ENCODE measurements at regions of chr11 and their contacts with region 1.

Region 1: GRCh38 chr11:65083834-65084597 is at the starts of genes CDCA5 and ZFPL1:
- DNase-seq: peak; percentile 96
- H3K4me3 Mint-ChIP-seq: peak within 1 kb of the TSS; percentile 97
- H3K27ac Mint-ChIP-seq: peak within 1 kb of the TSS; percentile 97
- H3K4me1 Mint-ChIP-seq: peaks cover 32% of the 10 kb centered on the region
- H3K27me3 Mint-ChIP-seq: no peaks in the 10 kb centered on the region
- total RNA-seq, gene CDCA5: 82.0 and 86.8 TPM in 2 replicates
- total RNA-seq, gene ZFPL1: 34.9 and 37.2 TPM in 2 replicates

Region 2: DNA sequence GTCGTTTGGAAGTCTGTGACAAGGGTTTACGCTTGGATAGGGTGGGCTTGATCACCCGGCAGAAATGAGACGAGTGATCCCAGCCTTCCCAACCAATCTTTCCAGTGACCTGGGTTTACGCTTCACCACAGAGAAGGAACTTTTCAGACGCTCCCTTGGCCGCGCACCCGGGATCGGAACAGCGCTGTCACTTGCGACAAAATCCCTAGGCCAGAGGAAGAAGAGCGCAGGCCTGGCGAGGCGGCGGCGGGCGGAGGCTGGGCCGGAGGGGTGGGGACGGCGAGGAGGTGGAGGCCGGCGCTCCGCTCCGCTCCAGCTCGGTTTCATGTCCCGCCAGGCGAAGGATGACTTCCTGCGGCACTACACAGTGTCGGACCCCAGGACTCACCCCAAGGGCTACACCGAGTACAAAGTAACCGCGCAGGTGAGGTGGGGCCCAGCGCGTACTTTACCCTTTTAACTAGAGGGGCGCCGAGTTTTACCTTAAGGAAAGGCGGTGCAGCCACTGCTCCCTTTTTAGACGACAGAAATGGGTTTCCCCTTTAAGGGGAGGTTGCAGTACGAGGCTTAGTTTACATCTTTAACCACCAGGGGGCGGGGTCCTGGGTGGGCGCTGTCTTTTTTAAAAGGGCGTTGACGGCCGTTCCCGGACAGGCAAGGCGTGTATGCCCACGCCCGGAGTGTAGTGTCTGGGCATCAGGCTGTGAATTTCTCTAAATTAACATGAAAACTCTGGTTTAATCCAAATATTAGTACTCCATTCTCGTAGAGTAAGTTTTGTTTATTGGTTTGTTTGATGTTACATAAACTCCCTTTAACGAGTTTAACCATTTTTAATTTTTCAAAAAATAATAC is 56.6 kb before region 1 on chr11 and contains the start of gene SNX15:
- intact Hi-C with region 1: loop called (anchors 5 kb)
- DNase-seq: peak; percentile 88
- H3K4me3 Mint-ChIP-seq: peak within 1 kb of the TSS; percentile 76
- H3K27ac Mint-ChIP-seq: peak within 1 kb of the TSS; percentile 87
- H3K4me1 Mint-ChIP-seq: peaks cover 15% of the 10 kb centered on the region
- H3K27me3 Mint-ChIP-seq: peaks cover 2% of the 10 kb centered on the region
- total RNA-seq, gene SNX15: 19.6 and 22.4 TPM in 2 replicates

Region 3: GRCh38 chr11:65040847-65041621 is 43.0 kb before region 1 on chr11 and contains the start of gene SAC3D1:
- intact Hi-C with region 1: loop called (anchors 5 kb)
- DNase-seq: peak; percentile 94
- H3K4me3 Mint-ChIP-seq: peak within 1 kb of the TSS; percentile 88
- H3K27ac Mint-ChIP-seq: peak within 1 kb of the TSS; percentile 96
- H3K4me1 Mint-ChIP-seq: peaks cover 19% of the 10 kb centered on the region
- H3K27me3 Mint-ChIP-seq: no peaks in the 10 kb centered on the region
- total RNA-seq, gene SAC3D1: 17.0 and 18.6 TPM in 2 replicates

Region 4: DNA sequence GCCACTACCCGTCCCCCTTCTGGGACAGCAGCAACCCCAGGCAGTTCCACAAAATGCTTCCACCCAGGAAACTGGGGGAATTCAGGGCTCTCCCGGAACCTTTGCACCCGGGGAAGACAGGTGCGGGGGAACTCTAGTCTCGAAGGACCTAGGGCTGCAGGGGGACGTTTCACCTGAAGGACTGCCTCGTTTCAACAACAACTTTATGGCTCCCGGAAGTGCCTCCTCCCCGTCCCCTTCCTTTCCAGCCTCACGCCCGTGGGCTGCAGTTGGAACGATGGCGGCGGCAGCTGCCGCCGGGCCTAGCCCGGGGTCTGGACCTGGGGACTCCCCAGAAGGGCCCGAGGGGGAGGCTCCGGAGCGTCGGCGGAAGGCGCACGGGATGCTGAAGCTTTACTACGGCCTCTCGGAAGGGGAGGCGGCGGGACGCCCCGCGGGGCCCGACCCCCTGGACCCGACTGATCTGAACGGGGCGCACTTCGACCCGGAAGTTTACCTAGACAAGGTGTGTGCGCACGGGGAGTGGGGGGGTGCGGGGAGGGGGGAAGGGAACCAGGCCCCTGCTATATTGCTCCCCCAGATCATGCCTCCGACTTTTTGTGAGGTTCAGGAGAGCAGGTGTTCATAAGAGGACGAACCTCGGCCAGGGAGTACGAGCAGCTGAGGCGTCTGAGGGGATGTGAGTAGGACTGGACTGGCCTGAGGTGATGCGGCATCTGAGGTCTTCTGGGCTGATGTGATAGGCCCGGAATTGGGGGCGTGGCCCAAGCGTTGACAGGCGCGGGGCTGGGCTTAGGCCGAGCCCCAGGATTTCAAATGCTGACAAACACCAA is 12.2 kb after region 1 on chr11 and contains the start of gene VPS51:
- intact Hi-C with region 1: loop called (anchors 1 kb)
- DNase-seq: peak; percentile 82
- H3K4me3 Mint-ChIP-seq: peak within 1 kb of the TSS; percentile 88
- H3K27ac Mint-ChIP-seq: peak within 1 kb of the TSS; percentile 96
- H3K4me1 Mint-ChIP-seq: peaks cover 11% of the 10 kb centered on the region
- H3K27me3 Mint-ChIP-seq: no peaks in the 10 kb centered on the region
- total RNA-seq, gene VPS51: 121 and 133 TPM in 2 replicates

Region 5: GRCh38 chr11:65111744-65112414 is 27.9 kb after region 1 on chr11 and contains the start of gene TM7SF2:
- intact Hi-C with region 1: loop called (anchors 2 kb)
- DNase-seq: peak; percentile 93
- H3K4me3 Mint-ChIP-seq: peak within 1 kb of the TSS; percentile 88
- H3K27ac Mint-ChIP-seq: peak within 1 kb of the TSS; percentile 73
- H3K4me1 Mint-ChIP-seq: peaks cover 25% of the 10 kb centered on the region
- H3K27me3 Mint-ChIP-seq: no peaks in the 10 kb centered on the region
- total RNA-seq, gene TM7SF2: 34.4 and 36.9 TPM in 2 replicates

Region 6: DNA sequence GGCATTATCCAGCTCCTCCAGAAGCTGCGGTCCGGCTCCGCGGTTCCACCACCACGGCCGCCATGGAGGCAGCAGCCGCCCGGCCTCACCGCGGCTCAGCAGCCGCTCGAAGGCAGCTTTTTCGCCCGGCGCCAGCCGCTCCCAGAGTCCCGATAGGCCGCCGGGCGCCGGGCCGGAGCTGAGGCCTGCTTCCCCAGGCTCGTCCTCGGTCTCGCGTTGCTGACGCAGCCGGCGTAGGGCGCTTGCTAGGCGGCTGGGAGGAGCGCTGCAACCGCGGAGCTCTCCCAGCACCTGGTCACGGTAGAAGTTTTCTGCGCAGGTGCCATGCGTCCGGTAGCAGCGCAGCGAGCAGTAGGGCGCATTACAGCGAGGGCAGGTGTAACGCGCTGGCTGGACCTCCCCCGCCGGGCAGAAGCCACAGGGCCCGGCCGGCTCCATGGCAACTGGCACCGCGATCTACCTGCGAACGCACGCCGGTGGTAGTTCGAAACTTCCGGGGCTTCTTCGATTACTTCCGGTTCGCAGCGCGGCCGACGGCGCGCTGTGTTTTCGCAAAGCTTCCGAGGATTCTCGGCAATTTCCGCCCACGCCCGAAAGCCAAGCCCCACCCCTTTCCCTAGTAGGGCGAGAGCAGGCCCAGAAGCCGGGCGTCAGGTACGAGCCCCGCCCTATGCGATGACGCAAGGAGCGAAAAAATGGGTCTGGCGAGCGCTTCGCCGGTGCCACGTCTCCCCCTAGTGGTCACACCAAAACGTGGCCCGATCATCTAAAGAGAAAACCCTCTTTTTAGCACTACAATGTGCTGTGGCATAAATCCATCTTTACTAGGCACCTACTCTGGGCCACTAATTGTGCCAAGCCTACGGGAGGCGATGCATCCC is 33.4 kb after region 1 on chr11 and contains the start of gene ZNHIT2:
- intact Hi-C with region 1: loop called (anchors 1 kb)
- DNase-seq: peak; percentile 100
- H3K4me3 Mint-ChIP-seq: peak within 1 kb of the TSS; percentile 84
- H3K27ac Mint-ChIP-seq: peak within 1 kb of the TSS; percentile 88
- H3K4me1 Mint-ChIP-seq: peaks cover 28% of the 10 kb centered on the region
- H3K27me3 Mint-ChIP-seq: no peaks in the 10 kb centered on the region
- total RNA-seq, gene ZNHIT2: 11.3 and 12.8 TPM in 2 replicates

Measured in activated T-helper 2 cell treated with anti-CD3 and anti-CD28 coated beads, Interferon-gamma antibody, Interleukin-2, Interleukin-4, amounts not matched to agents 10 μg/mL and 5 μg/mL and 100 μg/mL, durations not matched to agents 14 hours and 24 hours and 36 hours (primary cell).